GM10248 (cell line): ENCODE measurements at regions of chr1 and their contacts with region 1.

Region 1: GRCh38 chr1:16243936-16244649 is 7.1 kb upstream of the CPLANE2 start:
- DNase-seq: peak; percentile 78
- CTCF ChIP-seq: peak; percentile 79

Region 2: GRCh38 chr1:15771836-15772515 is 472.1 kb before region 1 on chr1:
- CTCF ChIA-PET with region 1: no interaction called
- POLR2A ChIA-PET with region 1: interaction called, 11 read pairs
- DNase-seq: no peak
- CTCF ChIP-seq: no peak

Region 3: DNA sequence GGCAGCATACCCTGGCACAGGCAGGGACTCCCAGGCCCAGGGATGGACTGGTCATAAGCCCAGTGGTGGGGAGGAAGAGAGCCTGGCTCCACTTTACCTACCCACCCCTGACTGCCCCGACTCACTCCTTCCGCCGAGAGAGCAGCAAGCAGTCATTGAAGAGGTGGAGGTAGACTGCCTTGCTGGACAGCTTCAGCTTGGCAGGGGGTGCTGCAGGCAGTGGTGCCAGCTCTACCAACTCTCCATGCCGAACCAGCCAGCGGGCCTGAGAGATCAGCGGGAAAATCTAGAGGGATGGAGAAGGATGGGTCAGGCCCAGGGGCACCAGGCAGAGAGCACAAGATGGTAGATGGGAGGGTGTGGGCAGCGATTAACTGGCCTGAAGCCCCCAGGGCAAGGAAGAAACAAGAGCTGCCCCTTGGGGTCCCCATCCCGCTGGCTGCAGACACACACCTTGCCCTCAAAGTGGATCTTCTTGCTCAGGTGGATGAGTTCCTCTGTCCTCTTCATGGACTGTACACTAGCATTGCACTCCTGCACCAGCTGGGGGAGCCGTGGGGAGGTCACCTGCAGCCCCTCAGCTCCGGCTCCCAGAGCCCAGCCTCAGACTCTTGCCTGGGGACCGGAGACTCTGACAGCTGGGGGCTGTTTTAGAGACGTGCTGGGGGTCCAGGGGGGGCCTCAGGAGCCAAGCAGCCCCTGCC is 39.3 kb before region 1 on chr1:
- CTCF ChIA-PET with region 1: interaction called, 10 read pairs
- POLR2A ChIA-PET with region 1: no interaction called
- DNase-seq: peak; percentile 55
- CTCF ChIP-seq: peak; percentile 64

Region 4: GRCh38 chr1:16217061-16217785 is 26.9 kb before region 1 on chr1:
- CTCF ChIA-PET with region 1: interaction called, 11 read pairs
- POLR2A ChIA-PET with region 1: no interaction called
- DNase-seq: peak; percentile 99
- CTCF ChIP-seq: no peak

Region 5: DNA sequence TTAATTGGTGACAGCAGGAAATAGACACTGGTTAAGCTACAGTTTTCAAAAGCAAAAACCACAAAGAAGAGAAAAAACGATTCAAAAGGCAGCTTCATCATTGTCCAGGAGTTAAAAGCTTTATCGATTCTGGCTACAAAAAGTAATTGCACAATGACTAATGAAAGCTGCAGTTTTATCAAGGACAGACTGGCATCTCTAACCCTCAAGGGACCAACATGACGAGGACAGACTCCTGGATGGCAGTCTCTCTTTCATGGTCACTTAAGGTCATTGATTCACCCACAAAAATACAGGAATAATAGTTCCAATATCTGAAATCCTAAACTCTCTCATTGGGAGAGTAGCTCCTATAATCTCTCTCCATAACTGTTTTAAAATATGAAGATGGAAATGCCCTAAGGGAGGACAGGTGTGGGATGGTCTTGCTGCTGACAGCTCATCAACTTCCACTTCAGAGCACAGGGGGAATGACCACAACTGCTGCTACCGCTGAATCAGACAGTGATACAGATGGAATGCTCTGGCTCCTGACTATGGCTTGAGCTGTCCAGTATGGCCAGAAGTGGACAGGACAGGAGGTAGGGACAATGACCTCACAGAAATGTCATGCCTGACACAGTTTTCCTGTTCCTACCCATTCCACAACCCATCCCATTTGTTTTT is 10.3 kb after region 1 on chr1:
- CTCF ChIA-PET with region 1: interaction called, 20 read pairs
- POLR2A ChIA-PET with region 1: no interaction called
- DNase-seq: no peak
- CTCF ChIP-seq: no peak

Region 6: GRCh38 chr1:16300436-16300835 is 56.3 kb after region 1 on chr1:
- CTCF ChIA-PET with region 1: no interaction called
- POLR2A ChIA-PET with region 1: no interaction called
- DNase-seq: no peak
- CTCF ChIP-seq: no peak

Region 7: GRCh38 chr1:16420424-16421118 is 176.5 kb after region 1 on chr1:
- CTCF ChIA-PET with region 1: no interaction called
- POLR2A ChIA-PET with region 1: no interaction called
- DNase-seq: peak; percentile 59
- CTCF ChIP-seq: no peak